ENCODE measurements at regions of chr6 and their contacts with region 1.

Region 1: GRCh38 chr6:2111162-2111677 is 134.2 kb downstream of the GMDS start:
- DNase-seq: peak; percentile 24
- ATAC-seq: peak; percentile 85
- H3K4me3 Mint-ChIP-seq: peak overlapping the region; percentile 62
- H3K27ac Mint-ChIP-seq: peak overlapping the region; percentile 88
- H3K4me1 Mint-ChIP-seq: peaks cover 31% of the 10 kb centered on the region
- H3K27me3 Mint-ChIP-seq: peaks cover 11% of the 10 kb centered on the region

Region 2: DNA sequence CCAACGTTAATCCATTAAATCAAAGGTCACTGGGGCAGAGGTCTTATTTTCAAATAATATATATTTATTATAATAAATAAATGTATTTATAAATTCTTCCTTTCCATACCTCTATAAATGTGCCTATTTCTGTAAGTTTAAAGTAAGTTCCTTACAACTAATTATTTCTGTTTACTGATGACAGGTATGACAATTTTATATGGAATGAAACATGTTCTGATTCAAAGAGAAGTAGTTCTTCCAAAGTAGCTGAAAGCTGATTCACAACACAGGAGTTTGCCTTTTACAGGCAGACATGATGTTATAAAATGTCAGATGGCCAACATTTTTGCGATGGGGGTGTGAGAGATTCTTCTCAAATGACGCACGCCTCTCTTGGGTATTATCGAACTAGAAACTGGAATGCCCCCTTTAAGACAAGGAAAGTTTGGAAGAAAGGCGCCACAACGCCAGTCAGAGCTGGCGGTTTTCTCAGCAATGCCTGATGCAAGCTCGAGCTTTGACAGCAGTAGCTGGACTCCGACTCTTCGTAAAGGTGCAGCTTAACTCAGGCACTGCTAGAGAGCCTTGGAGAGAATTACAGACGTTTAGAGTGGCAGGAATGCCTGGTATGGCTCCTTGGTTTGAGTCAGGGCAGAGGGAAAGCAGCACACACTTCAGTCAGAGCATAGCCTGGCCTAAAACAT is 409.4 kb before region 1 on chr6:
- CTCF ChIA-PET with region 1: no interaction called
- POLR2A ChIA-PET with region 1: no interaction called
- intact Hi-C with region 1: no loop called
- DNase-seq: no peak
- ATAC-seq: no peak
- H3K4me3 Mint-ChIP-seq: no peak overlapping the region
- H3K27ac Mint-ChIP-seq: no peak overlapping the region
- H3K4me1 Mint-ChIP-seq: no peaks in the 10 kb centered on the region
- H3K27me3 Mint-ChIP-seq: no peaks in the 10 kb centered on the region

Region 3: DNA sequence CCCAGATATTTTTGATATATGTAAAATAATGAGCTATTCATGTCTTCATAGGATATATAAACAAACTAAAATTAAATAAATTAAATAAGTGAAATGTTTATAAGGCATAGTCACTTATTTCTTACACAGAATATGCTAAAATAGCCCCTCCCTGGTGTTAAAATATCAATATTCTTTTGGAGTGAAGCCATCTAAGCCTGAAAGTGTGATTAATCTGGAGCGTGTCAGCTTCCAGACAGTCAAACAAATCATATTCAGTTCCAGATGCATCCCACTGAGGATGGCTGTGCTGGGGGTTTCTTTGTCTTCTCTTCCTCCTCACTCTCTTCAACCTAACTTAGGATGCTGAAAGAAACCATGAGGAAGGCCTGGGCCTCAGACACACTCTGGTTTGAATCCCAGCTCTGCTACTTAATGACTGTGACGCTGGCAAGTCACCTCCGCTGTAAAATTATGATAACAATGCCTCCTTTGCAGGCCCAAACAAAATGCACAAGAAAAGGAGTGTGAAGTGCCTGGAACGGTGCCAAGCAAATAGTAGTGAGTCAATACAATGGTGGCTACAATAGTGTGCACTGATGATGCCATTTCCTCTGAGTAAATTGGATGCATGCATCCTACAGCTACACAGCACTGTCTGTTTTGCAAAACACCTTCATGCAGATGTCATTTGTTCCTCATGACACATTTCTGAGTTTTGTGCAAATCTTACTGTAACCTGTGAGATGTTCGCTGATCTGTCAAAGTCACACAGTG is 340.1 kb before region 1 on chr6:
- CTCF ChIA-PET with region 1: no interaction called
- POLR2A ChIA-PET with region 1: interaction called, 4 read pairs
- intact Hi-C with region 1: loop called (anchors 1 to 2 kb)
- DNase-seq: peak; percentile 79
- ATAC-seq: peak; percentile 94
- H3K4me3 Mint-ChIP-seq: no peak overlapping the region
- H3K27ac Mint-ChIP-seq: peak overlapping the region; percentile 85
- H3K4me1 Mint-ChIP-seq: peaks cover 55% of the 10 kb centered on the region
- H3K27me3 Mint-ChIP-seq: no peaks in the 10 kb centered on the region

Region 4: GRCh38 chr6:2086326-2086965 is 24.8 kb before region 1 on chr6:
- CTCF ChIA-PET with region 1: no interaction called
- POLR2A ChIA-PET with region 1: no interaction called
- intact Hi-C with region 1: no loop called
- DNase-seq: no peak
- ATAC-seq: no peak
- H3K4me3 Mint-ChIP-seq: no peak overlapping the region
- H3K27ac Mint-ChIP-seq: no peak overlapping the region
- H3K4me1 Mint-ChIP-seq: peaks cover 14% of the 10 kb centered on the region
- H3K27me3 Mint-ChIP-seq: no peaks in the 10 kb centered on the region

Region 5: DNA sequence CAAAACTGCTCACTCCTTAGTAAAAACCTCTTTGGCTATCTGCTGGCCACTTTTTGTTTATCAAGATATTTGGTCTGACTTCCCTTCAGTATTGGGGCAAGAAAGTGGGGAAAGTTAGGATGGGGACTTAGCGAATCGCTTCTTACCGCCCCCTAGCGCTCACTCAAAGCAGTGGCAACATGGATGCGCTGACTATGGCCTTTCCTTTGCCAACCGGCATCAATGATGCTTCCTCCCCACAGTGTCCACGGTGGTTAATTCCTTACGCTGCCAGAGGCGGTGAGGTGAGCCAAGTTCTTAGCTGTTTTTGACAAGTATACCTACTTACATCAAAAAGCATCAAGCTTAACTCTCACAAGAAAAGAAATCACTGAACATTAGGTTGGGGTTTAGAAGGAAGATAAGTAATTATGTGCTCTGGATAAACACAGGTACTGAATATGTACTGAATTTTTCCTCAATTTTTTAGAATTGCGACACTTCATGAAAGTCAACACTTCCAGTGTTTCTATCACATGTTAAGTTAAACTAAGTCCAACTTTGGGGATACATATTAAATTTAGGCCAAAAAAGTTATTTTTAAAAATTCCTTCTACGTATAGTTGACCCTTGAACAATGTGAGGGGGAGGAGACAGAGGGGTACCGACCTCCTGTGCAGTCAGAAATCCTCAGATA is 47.5 kb after region 1 on chr6:
- CTCF ChIA-PET with region 1: no interaction called
- POLR2A ChIA-PET with region 1: no interaction called
- intact Hi-C with region 1: loop called in 1 of 2 experiments (anchors 5 kb)
- DNase-seq: peak; percentile 20
- ATAC-seq: no peak
- H3K4me3 Mint-ChIP-seq: no peak overlapping the region
- H3K27ac Mint-ChIP-seq: no peak overlapping the region
- H3K4me1 Mint-ChIP-seq: peaks cover 45% of the 10 kb centered on the region
- H3K27me3 Mint-ChIP-seq: no peaks in the 10 kb centered on the region

Region 6: GRCh38 chr6:2245094-2245876 is 134.1 kb after region 1 on chr6 and contains the start of gene GMDS:
- CTCF ChIA-PET with region 1: no interaction called
- POLR2A ChIA-PET with region 1: no interaction called
- intact Hi-C with region 1: loop called in 1 of 2 experiments (anchors 1 kb)
- DNase-seq: peak; percentile 89
- ATAC-seq: peak; percentile 94
- H3K4me3 Mint-ChIP-seq: peak within 1 kb of the TSS; percentile 91
- H3K27ac Mint-ChIP-seq: peak within 1 kb of the TSS; percentile 97
- H3K4me1 Mint-ChIP-seq: peaks cover 56% of the 10 kb centered on the region
- H3K27me3 Mint-ChIP-seq: no peaks in the 10 kb centered on the region
- total RNA-seq, gene GMDS: 33.2 to 33.5 TPM

Region 7: GRCh38 chr6:2563635-2564034 is 452.4 kb after region 1 on chr6:
- CTCF ChIA-PET with region 1: no interaction called
- POLR2A ChIA-PET with region 1: no interaction called
- intact Hi-C with region 1: loop called (anchors 2 to 5 kb)
- DNase-seq: peak; percentile 44
- ATAC-seq: peak; percentile 98
- H3K4me3 Mint-ChIP-seq: no peak overlapping the region
- H3K27ac Mint-ChIP-seq: no peak overlapping the region
- H3K4me1 Mint-ChIP-seq: peaks cover 10% of the 10 kb centered on the region
- H3K27me3 Mint-ChIP-seq: peaks cover 47% of the 10 kb centered on the region

Region 8: DNA sequence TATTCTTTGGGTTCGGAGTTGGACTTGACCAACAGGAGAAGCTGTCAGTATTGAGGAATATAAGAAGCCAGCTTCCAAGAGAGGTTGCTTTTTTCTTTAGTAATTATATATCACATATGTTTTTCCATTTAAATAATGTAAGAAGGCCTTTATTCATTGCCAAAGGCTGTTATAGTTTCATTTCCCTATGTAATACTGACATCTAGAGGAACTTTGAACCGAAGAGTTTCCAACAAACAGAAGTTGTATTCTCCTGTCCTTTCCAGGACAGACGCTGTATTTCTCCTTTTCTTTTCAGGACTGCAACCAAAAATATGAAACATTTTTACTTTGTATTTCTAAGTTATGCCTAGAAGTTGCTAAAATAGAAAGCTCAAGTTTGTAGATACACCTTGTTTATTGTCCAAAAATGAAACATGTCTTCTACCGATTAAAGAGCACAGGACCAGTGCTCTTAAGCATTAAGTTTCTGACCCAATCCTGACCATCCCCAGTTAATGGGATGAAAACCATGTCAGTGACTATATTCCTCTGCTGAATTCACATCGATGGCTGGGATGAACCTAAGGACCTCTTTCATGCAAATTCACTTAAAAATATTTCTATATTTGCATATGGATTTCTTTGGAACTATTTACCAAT is 584.4 kb after region 1 on chr6:
- CTCF ChIA-PET with region 1: no interaction called
- POLR2A ChIA-PET with region 1: no interaction called
- intact Hi-C with region 1: no loop called
- DNase-seq: no peak
- ATAC-seq: no peak
- H3K4me3 Mint-ChIP-seq: no peak overlapping the region
- H3K27ac Mint-ChIP-seq: no peak overlapping the region
- H3K4me1 Mint-ChIP-seq: no peaks in the 10 kb centered on the region
- H3K27me3 Mint-ChIP-seq: no peaks in the 10 kb centered on the region

Measured in activated CD4-positive, alpha-beta T cell treated with anti-CD3 and anti-CD28 coated beads for 36 hours (primary cell).